PC-3 (cell line): ENCODE measurements at regions of chr20 and their contacts with region 1.

Region 1: GRCh38 chr20:1062334-1063010 is 55.9 kb upstream of the PSMF1 start:
- DNase-seq: peak; percentile 10
- ATAC-seq: no peak
- H3K4me3 ChIP-seq: no peak overlapping the region
- H3K27ac ChIP-seq: no peak overlapping the region
- H3K4me1 ChIP-seq: no peaks in the 10 kb centered on the region
- H3K27me3 ChIP-seq: peaks cover 16% of the 10 kb centered on the region
- CTCF ChIP-seq: no peak

Region 2: DNA sequence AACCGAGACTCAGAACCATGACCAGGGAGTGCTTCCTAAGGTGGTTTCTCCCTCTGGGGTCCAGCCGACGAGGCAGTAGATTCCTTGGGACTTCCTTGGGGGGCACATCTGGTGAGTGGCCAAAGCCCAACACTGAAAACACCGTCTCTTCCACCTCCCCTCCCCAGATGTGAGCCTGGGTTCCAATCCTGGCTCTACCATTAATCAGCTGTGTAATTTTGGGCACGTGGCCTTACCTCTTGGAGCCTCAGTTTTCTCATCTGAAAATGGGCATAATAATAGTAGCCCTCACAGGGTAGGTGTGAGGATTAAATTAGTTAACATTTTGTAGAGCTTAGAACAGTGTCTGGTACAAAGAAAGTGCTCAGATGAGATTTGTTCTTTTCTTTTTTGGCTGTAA is 223.5 kb before region 1 on chr20:
- CTCF ChIA-PET with region 1: no interaction called
- POLR2A ChIA-PET with region 1: interaction called, 10 read pairs
- intact Hi-C with region 1: no loop called
- DNase-seq: no peak
- ATAC-seq: no peak
- H3K4me3 ChIP-seq: no peak overlapping the region
- H3K27ac ChIP-seq: no peak overlapping the region
- H3K4me1 ChIP-seq: peaks cover 51% of the 10 kb centered on the region
- H3K27me3 ChIP-seq: no peaks in the 10 kb centered on the region
- CTCF ChIP-seq: no peak